ENCODE measurements at regions of chr14 and their contacts with region 1.

Region 1: GRCh38 chr14:21014761-21015190 is 10.1 kb downstream of the NDRG2 start:
- DNase-seq: peak; percentile 61 to 90 (median 84)
- ATAC-seq: peak; percentile 78
- H3K4me3 ChIP-seq: no peak overlapping the region
- H3K4me3 Mint-ChIP-seq: no peak overlapping the region
- H3K27ac ChIP-seq: no peak overlapping the region
- H3K27ac Mint-ChIP-seq: no peak overlapping the region
- H3K4me1 ChIP-seq: no peaks in the 10 kb centered on the region
- H3K4me1 Mint-ChIP-seq: no peaks in the 10 kb centered on the region
- H3K27me3 ChIP-seq: peaks cover 0 to 4% of the 10 kb centered on the region in 2 experiments
- H3K27me3 Mint-ChIP-seq: peaks cover 13% of the 10 kb centered on the region
- CTCF ChIP-seq: peak; percentile 79

Region 2: GRCh38 chr14:20989572-20990551 is 24.9 kb before region 1 on chr14 and contains the start of gene METTL17:
- CTCF ChIA-PET with region 1: interaction called, 62 read pairs
- POLR2A ChIA-PET with region 1: no interaction called
- intact Hi-C with region 1: no loop called
- DNase-seq: peak; percentile 65 to 94 (median 85)
- ATAC-seq: peak; percentile 92
- H3K4me3 ChIP-seq: peak within 1 kb of the TSS; percentile 92 to 96
- H3K4me3 Mint-ChIP-seq: peak within 1 kb of the TSS; percentile 95
- H3K27ac ChIP-seq: peak within 1 kb of the TSS; percentile 65 to 73
- H3K27ac Mint-ChIP-seq: peak within 1 kb of the TSS; percentile 94
- H3K4me1 ChIP-seq: peaks cover 18% of the 10 kb centered on the region
- H3K4me1 Mint-ChIP-seq: peaks cover 28% of the 10 kb centered on the region
- H3K27me3 ChIP-seq: no peaks in the 10 kb centered on the region
- H3K27me3 Mint-ChIP-seq: no peaks in the 10 kb centered on the region
- CTCF ChIP-seq: peak; percentile 28
- total RNA-seq, gene METTL17: 82.3 to 88.8 TPM

Region 3: DNA sequence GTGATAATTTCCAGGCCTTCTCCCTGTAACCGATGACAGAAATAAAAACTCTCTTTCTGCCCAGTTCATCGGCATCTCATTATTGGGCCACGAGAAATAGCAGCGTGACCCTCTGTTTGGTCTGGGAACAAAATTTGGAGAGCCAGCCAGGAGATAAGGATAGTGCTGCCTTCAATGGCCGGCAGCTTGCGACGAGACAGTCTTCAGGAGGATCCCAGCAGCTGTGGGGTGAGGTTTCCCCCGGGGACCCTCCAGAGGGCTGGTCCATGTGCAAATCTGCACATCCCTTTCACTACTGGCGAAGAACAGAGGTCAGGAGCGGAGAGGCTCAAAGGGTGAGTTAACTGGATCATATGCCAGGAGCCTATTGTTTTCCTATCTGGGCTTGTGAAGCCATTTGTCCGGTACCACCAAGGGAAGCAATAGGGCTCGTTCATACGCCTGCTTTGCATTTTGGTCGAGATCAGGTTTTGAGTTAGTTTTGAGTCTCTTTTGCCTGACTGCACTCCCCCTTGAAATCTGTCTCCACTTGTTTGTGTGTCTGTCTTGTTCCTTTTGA is 10.9 kb before region 1 on chr14:
- CTCF ChIA-PET with region 1: interaction called, 62 read pairs
- POLR2A ChIA-PET with region 1: interaction called, 6 read pairs
- intact Hi-C with region 1: no loop called
- DNase-seq: no peak
- ATAC-seq: no peak
- H3K4me3 ChIP-seq: no peak overlapping the region
- H3K4me3 Mint-ChIP-seq: no peak overlapping the region
- H3K27ac ChIP-seq: no peak overlapping the region
- H3K27ac Mint-ChIP-seq: no peak overlapping the region
- H3K4me1 ChIP-seq: no peaks in the 10 kb centered on the region
- H3K4me1 Mint-ChIP-seq: no peaks in the 10 kb centered on the region
- H3K27me3 ChIP-seq: no peaks in the 10 kb centered on the region
- H3K27me3 Mint-ChIP-seq: no peaks in the 10 kb centered on the region
- CTCF ChIP-seq: no peak

Region 4: GRCh38 chr14:21039585-21040369 is 25.0 kb after region 1 on chr14:
- CTCF ChIA-PET with region 1: interaction called, 416 read pairs
- POLR2A ChIA-PET with region 1: interaction called, 18 read pairs
- intact Hi-C with region 1: loop called (anchors 1 kb)
- DNase-seq: peak in 4 of 9 experiments; percentile 29 to 69 (median 58)
- ATAC-seq: peak; percentile 77
- H3K4me3 ChIP-seq: no peak overlapping the region
- H3K4me3 Mint-ChIP-seq: no peak overlapping the region
- H3K27ac ChIP-seq: no peak overlapping the region
- H3K27ac Mint-ChIP-seq: no peak overlapping the region
- H3K4me1 ChIP-seq: no peaks in the 10 kb centered on the region
- H3K4me1 Mint-ChIP-seq: peaks cover 7% of the 10 kb centered on the region
- H3K27me3 ChIP-seq: peaks cover 0 to 3% of the 10 kb centered on the region in 2 experiments
- H3K27me3 Mint-ChIP-seq: peaks cover 15% of the 10 kb centered on the region
- CTCF ChIP-seq: peak; percentile 46

Region 5: GRCh38 chr14:21071225-21072030 is 56.7 kb after region 1 on chr14:
- CTCF ChIA-PET with region 1: interaction called, 18 read pairs
- POLR2A ChIA-PET with region 1: no interaction called
- intact Hi-C with region 1: no loop called
- DNase-seq: peak in 6 of 9 experiments; percentile 32 to 64 (median 52)
- ATAC-seq: peak; percentile 43
- H3K4me3 ChIP-seq: peak overlapping the region; percentile 47 to 59
- H3K4me3 Mint-ChIP-seq: peak overlapping the region; percentile 83
- H3K27ac ChIP-seq: no peak overlapping the region
- H3K27ac Mint-ChIP-seq: no peak overlapping the region
- H3K4me1 ChIP-seq: peaks cover 35% of the 10 kb centered on the region
- H3K4me1 Mint-ChIP-seq: peaks cover 34% of the 10 kb centered on the region
- H3K27me3 ChIP-seq: peaks cover 33 to 36% of the 10 kb centered on the region in 2 experiments
- H3K27me3 Mint-ChIP-seq: peaks cover 60% of the 10 kb centered on the region
- CTCF ChIP-seq: no peak

Region 6: DNA sequence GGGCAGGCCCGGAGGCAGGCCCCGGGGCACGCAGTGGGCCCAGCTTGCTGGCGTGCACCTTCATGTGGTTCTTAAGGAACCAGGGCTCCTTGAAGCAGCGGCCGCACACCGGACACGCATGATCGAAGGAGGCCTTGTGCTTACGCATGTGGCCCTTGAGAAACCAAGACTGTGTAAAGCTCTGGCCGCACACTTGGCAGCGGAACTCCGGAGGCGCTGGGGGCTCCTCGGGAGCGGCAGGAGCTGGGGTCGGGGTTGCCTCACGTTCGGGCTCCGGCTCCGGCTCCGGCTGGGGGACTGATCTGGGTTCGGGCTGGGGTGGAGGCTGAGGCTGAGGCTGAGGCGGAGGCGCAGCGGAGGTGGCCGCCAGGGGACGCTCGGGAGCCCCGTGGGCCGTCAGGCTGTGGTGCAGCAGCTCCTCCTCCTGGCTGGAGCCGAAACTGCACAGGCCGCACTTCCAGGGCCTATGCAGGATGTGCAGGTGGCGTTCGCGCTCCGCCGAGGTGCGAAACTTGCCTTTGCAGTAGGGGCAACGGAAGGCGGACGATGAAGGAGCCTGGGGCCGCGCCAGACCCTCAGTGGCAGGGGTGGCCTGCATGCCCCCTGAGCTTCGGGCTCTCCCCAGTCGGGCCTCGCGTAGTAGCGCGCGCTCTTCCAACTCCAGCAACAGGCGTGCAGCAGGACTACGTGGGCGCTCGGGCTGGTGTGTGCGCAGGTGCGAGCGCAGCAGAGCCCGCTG is 77.7 kb after region 1 on chr14:
- CTCF ChIA-PET with region 1: interaction called, 169 read pairs
- POLR2A ChIA-PET with region 1: interaction called, 7 read pairs
- intact Hi-C with region 1: loop called (anchors 1 kb)
- DNase-seq: peak; percentile 86 to 97 (median 92)
- ATAC-seq: peak; percentile 89
- H3K4me3 ChIP-seq: no peak overlapping the region
- H3K4me3 Mint-ChIP-seq: no peak overlapping the region
- H3K27ac ChIP-seq: no peak overlapping the region
- H3K27ac Mint-ChIP-seq: peak overlapping the region; percentile 71
- H3K4me1 ChIP-seq: peaks cover 18% of the 10 kb centered on the region
- H3K4me1 Mint-ChIP-seq: peaks cover 28% of the 10 kb centered on the region
- H3K27me3 ChIP-seq: no peaks in the 10 kb centered on the region
- H3K27me3 Mint-ChIP-seq: no peaks in the 10 kb centered on the region
- CTCF ChIP-seq: peak; percentile 100

Region 7: GRCh38 chr14:21572604-21573003 is 557.8 kb after region 1 on chr14:
- CTCF ChIA-PET with region 1: no interaction called
- POLR2A ChIA-PET with region 1: no interaction called
- intact Hi-C with region 1: no loop called
- DNase-seq: no peak
- ATAC-seq: no peak
- H3K4me3 ChIP-seq: no peak overlapping the region
- H3K4me3 Mint-ChIP-seq: no peak overlapping the region
- H3K27ac ChIP-seq: no peak overlapping the region
- H3K27ac Mint-ChIP-seq: no peak overlapping the region
- H3K4me1 ChIP-seq: no peaks in the 10 kb centered on the region
- H3K4me1 Mint-ChIP-seq: no peaks in the 10 kb centered on the region
- H3K27me3 ChIP-seq: peaks cover 0 to 2% of the 10 kb centered on the region in 2 experiments
- H3K27me3 Mint-ChIP-seq: peaks cover 25% of the 10 kb centered on the region
- CTCF ChIP-seq: no peak